MCF 10A (cell line): ENCODE measurements at regions of chr11 and their contacts with region 1.

Region 1: DNA sequence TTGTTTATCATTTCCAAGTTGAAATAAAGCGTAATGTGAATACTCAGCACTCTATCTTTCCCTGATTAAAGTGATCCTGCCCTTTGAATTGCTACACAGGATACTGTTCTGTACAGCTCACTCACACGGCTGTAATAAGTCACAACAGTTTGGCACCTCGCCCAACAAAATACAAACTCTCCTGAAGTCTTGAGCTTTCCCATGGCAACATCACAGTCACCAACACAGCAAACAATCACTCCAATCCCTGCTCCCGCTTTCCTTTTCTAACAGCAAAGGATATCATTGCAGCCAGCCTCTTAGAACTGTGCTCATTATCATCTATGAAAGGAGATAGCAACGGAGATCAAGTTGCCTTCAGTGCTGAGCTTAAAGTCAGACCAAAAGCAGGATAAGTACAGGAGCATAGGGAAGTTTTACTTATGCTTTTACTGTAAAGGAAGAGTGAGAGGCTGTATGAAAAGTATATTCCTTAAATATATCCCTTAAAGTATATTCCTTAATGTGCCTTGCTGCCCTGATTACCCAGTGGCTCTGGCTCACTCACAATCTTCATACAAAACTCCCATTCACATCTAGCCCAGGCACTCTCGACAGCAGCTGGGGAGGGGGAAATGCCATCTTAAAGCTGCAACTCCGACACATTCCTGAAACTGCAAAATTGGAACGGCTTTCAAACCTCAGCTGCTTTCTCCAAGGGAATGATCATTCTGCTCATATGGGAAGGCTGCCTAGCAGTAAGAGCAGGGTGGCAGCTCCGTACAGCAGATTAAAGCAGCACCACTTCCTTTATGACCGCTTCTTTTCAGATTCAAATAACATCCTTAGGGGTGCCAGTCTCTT is 35.8 kb downstream of the MAML2 start:
- DNase-seq: peak; percentile 100
- H3K4me3 Mint-ChIP-seq: peak overlapping the region; percentile 68
- H3K27ac Mint-ChIP-seq: peak overlapping the region; percentile 97
- H3K4me1 Mint-ChIP-seq: peaks cover 59% of the 10 kb centered on the region
- H3K27me3 Mint-ChIP-seq: no peaks in the 10 kb centered on the region
- CTCF ChIP-seq: no peak

Region 2: DNA sequence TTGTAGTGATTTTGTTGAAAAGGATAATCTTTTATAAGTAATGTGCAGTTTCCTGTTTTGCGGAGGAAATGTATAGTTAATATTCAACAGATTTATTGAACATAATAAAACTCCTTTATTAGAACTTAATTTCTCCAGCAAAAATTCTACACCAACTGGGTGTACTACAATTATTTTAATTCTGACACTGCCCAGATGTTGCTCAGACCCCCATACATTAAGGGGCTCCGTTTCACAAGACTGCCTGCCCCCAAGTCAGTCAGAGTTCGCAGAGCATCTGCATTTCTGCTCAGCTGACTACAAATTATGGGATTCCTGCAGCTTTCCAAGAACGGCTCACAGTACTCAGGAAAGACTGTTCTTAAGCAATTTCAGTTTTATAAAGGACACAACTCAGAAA is 510.7 kb before region 1 on chr11:
- CTCF ChIA-PET with region 1: no interaction called
- POLR2A ChIA-PET with region 1: no interaction called
- intact Hi-C with region 1: no loop called
- DNase-seq: no peak
- H3K4me3 Mint-ChIP-seq: no peak overlapping the region
- H3K27ac Mint-ChIP-seq: no peak overlapping the region
- H3K4me1 Mint-ChIP-seq: peaks cover 17% of the 10 kb centered on the region
- H3K27me3 Mint-ChIP-seq: no peaks in the 10 kb centered on the region
- CTCF ChIP-seq: no peak

Region 3: GRCh38 chr11:96279018-96279895 is 27.9 kb before region 1 on chr11:
- CTCF ChIA-PET with region 1: interaction called, 6 read pairs
- POLR2A ChIA-PET with region 1: interaction called, 19 read pairs
- intact Hi-C with region 1: no loop called
- DNase-seq: peak; percentile 66
- H3K4me3 Mint-ChIP-seq: no peak overlapping the region
- H3K27ac Mint-ChIP-seq: peak overlapping the region; percentile 25
- H3K4me1 Mint-ChIP-seq: peaks cover 35% of the 10 kb centered on the region
- H3K27me3 Mint-ChIP-seq: no peaks in the 10 kb centered on the region
- CTCF ChIP-seq: no peak